Mammary epithelial cell (primary cell): ENCODE measurements at regions of chr12 and their contacts with region 1.

Region 1: GRCh38 chr12:109385339-109386067 is 37.8 kb downstream of the MYO1H start:
- DNase-seq: peak; percentile 55
- H3K4me3 ChIP-seq: no peak overlapping the region
- H3K27ac ChIP-seq: no peak overlapping the region
- H3K4me1 ChIP-seq: no peaks in the 10 kb centered on the region
- H3K27me3 ChIP-seq: no peaks in the 10 kb centered on the region
- CTCF ChIP-seq: peak; percentile 18 to 56

Region 2: GRCh38 chr12:108562348-108563135 is 823.0 kb before region 1 on chr12 and contains the start of gene ISCU:
- CTCF ChIA-PET with region 1: no interaction called
- dilution Hi-C with region 1: no loop called
- in situ Hi-C with region 1: no loop called
- intact Hi-C with region 1: loop called (anchors 5 kb)
- DNase-seq: peak; percentile 96
- H3K4me3 ChIP-seq: peak within 1 kb of the TSS; percentile 88
- H3K27ac ChIP-seq: peak within 1 kb of the TSS; percentile 93
- H3K4me1 ChIP-seq: peaks cover 30% of the 10 kb centered on the region
- H3K27me3 ChIP-seq: no peaks in the 10 kb centered on the region
- CTCF ChIP-seq: no peak
- total RNA-seq, gene ISCU: 55.3 to 77.6 TPM

Region 3: GRCh38 chr12:109099431-109100020 is 286.0 kb before region 1 on chr12:
- CTCF ChIA-PET with region 1: no interaction called
- dilution Hi-C with region 1: loop called (anchors 25 kb)
- in situ Hi-C with region 1: loop called in 1 of 2 experiments (anchors 10 kb)
- intact Hi-C with region 1: loop called (anchors 5 kb)
- DNase-seq: no peak
- H3K4me3 ChIP-seq: peak overlapping the region in 2 of 3 experiments; percentile 78 to 90
- H3K27ac ChIP-seq: no peak overlapping the region
- H3K4me1 ChIP-seq: peaks cover 12% of the 10 kb centered on the region
- H3K27me3 ChIP-seq: no peaks in the 10 kb centered on the region
- CTCF ChIP-seq: no peak

Region 4: GRCh38 chr12:109110988-109111495 is 274.5 kb before region 1 on chr12:
- CTCF ChIA-PET with region 1: interaction called, 7 read pairs
- dilution Hi-C with region 1: loop called (anchors 25 kb)
- in situ Hi-C with region 1: loop called (anchors 5 to 10 kb)
- intact Hi-C with region 1: loop called (anchors 1 kb)
- DNase-seq: peak; percentile 65
- H3K4me3 ChIP-seq: peak overlapping the region; percentile 23 to 52 (median 37)
- H3K27ac ChIP-seq: peak overlapping the region; percentile 33
- H3K4me1 ChIP-seq: peaks cover 11% of the 10 kb centered on the region
- H3K27me3 ChIP-seq: no peaks in the 10 kb centered on the region
- CTCF ChIP-seq: no peak

Region 5: DNA sequence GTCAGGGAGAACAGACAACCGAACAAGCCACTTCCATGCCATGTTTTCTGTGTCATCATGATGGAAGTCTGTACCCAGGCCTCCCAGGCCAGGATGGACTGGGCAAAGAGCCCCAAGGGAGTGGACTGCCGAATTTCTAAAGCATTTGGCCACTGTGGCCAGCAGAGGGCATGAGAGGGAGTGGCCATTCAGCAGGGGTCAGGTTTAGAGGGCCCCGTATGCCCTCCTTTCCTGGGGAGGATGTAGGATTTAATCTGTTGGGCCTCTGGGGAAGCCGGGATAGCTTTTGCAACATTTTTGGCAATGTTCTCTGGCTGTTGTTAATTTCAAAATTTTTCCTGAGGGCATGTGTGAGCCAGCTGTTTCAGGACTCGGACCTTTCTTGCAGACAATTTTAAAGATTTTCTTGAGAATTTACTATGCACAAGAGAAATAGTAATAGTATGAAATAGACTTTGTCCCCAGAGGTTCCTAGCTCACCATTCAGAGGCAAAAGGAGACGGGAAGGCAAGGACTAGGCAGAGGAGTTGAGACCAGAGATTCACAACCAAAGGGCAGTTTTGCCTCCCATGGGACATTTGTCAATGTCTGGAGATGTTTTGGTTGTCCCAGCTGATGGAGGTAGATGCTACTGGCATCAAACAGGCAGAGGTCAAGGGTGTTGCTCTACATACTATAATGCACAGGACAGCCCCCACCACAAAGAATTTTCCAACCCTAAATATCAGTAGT is 251.2 kb before region 1 on chr12:
- CTCF ChIA-PET with region 1: no interaction called
- dilution Hi-C with region 1: no loop called
- in situ Hi-C with region 1: no loop called
- intact Hi-C with region 1: loop called (anchors 2 kb)
- DNase-seq: peak; percentile 3
- H3K4me3 ChIP-seq: no peak overlapping the region
- H3K27ac ChIP-seq: no peak overlapping the region
- H3K4me1 ChIP-seq: no peaks in the 10 kb centered on the region
- H3K27me3 ChIP-seq: no peaks in the 10 kb centered on the region
- CTCF ChIP-seq: peak; percentile 47 to 66

Region 6: DNA sequence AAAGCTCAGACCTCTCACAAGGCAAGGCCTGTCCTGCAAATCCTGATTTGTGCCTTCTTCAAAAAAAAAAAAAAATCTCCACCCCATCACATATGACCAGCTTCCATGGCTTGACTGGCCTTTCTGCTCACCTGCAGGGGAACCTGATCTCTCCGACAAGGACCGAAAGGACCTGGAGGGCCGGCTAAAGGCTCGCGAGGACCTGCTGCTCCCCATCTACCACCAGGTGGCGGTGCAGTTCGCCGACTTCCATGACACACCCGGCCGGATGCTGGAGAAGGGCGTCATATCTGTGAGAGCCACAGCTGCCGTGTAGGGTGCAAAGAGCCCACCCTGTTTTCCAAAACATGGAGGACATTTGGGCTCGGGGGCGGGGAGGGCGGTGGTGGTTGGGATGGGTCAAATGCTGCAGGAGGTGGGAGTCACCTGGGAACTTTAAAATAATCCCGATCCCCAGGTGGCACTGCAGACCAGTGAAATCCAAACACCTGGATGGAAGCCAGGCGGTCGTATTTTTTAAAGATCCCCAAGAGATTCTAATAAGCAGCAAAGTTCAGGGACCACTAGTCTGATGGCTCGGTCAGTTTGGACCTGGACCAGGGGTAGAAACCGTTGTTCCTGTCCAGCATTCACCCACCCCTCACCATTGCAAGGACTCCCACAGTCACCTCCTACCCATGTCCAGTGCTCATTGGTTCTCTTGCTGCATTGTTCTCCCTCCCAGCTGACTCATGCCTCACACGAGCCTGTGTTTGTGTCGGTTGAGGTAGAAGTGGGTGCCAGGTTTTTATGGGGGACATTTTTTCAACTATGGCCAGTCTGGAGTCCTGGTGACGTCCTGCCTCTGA is 121.2 kb before region 1 on chr12:
- CTCF ChIA-PET with region 1: no interaction called
- dilution Hi-C with region 1: no loop called
- in situ Hi-C with region 1: loop called (anchors 5 to 10 kb)
- intact Hi-C with region 1: loop called (anchors 1 kb)
- DNase-seq: peak; percentile 30
- H3K4me3 ChIP-seq: no peak overlapping the region
- H3K27ac ChIP-seq: no peak overlapping the region
- H3K4me1 ChIP-seq: no peaks in the 10 kb centered on the region
- H3K27me3 ChIP-seq: no peaks in the 10 kb centered on the region
- CTCF ChIP-seq: peak; percentile 58 to 82

Region 7: DNA sequence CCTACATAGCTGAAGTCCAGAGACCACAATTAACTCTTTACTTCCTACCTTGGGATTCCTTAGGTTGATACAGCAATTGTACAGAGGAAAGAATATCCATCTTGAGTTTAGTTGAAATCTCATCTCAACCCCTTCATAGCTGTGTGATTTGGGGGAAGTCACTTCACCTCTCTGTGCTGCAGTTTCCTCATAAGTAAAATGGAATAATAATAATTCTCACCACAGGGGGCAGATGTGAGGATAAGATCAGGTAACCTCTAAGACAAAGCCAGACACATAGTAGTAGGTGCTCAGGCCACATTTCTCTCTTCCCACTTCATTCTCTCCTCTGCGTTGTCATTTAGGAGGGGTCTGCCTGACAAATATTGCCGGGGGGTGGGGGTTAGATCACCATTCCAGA is 83.1 kb before region 1 on chr12:
- CTCF ChIA-PET with region 1: no interaction called
- dilution Hi-C with region 1: loop called (anchors 5 kb)
- in situ Hi-C with region 1: no loop called
- intact Hi-C with region 1: loop called (anchors 5 kb)
- DNase-seq: peak; percentile 9
- H3K4me3 ChIP-seq: no peak overlapping the region
- H3K27ac ChIP-seq: no peak overlapping the region
- H3K4me1 ChIP-seq: peaks cover 6% of the 10 kb centered on the region
- H3K27me3 ChIP-seq: peaks cover 3% of the 10 kb centered on the region
- CTCF ChIP-seq: peak; percentile 14 to 28